ENCODE measurements at regions of chr20 and their contacts with region 1.

Region 1: GRCh38 chr20:25247956-25248785 is at the start of gene PYGB:
- DNase-seq: peak; percentile 87
- ATAC-seq: peak; percentile 88
- total RNA-seq, gene PYGB: 170 TPM

Region 2: GRCh38 chr20:25195014-25195961 is 52.9 kb before region 1 on chr20 and contains the start of gene ENTPD6:
- intact Hi-C with region 1: loop called (anchors 5 kb)
- DNase-seq: peak; percentile 96
- ATAC-seq: peak; percentile 88
- total RNA-seq, gene ENTPD6: 118 TPM